ENCODE measurements at regions of chr2 and their contacts with region 1.

Region 1: DNA sequence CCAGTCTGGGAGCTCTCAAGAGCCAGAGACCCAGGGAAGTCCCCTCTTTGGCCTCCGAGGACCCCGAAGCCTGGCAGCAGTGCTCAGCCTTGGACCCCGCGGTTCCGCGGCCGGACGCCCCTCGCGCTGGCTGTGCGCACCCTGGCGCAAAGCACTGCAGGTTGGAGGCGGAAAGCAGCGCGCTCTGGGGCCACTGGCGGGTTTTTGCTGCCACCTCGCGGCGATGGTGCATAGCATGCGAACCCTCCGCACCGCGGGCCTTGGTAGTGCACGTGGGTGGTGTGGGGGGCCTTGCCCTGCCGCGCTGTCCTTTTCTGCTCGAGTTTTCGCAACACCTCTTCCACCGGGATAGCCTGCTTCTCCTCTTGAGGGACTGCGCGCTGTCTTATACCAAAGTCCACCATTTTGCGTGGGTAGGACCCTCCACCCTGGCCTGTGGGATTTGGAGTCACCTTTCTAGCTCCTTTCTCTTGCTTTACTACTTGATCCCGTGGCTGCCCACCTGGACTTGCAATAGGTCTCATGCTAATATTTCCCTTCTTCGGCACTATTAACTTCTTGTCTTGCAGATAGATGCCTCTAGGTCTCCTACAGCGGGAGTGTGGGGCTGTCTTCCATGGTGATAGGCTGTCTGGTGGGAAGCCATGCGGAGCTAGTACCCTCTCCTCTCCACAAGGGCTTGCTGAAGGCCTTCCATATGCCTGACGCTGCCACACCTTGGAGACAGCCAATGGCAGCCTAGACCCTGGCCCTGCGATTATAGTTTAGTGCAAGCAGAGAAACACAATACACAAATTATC is 14.3 kb downstream of the SIX3 start:
- DNase-seq: no peak
- H3K4me3 ChIP-seq: peak overlapping the region in 2 of 3 experiments; percentile 43 to 49
- H3K27ac ChIP-seq: no peak overlapping the region
- H3K4me1 ChIP-seq: peaks cover 31% of the 10 kb centered on the region
- H3K27me3 ChIP-seq: peaks cover 43% of the 10 kb centered on the region
- CTCF ChIP-seq: peak; percentile 71 to 98 (median 96)

Region 2: DNA sequence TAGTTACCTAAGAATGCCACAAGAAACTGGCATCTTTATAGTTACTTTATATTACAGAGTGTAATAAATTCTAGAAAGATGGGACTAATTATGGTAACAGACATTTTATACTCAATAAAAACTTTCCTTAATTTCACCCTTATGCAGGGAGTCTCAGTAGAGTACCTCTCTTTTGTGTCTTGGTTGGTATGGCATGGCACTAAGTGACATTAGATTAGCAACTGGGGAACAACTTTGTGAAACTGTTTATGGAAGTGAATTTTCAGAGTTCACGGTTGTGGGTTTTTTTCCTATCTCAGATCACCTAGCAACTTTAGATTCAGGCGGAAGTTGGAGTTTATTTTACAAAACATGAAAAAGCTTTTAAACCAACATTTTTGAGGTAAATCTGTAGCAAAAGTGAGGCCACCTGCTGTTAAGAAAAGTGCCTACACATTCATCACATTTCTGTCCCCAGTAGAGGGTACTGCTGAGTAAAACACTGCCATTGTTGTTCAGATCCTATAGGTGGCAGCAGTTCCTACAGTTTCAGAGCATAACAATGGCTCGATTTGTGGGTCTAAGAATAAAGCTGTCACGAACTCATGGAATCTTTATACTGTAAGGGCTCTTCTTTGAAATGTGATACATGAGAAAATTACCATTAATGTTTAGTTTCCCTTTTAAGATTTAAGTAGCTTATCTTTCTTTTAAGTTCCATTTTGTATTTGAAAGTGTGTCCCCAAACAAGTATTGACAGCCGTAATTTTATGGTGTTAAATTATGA is 476.5 kb before region 1 on chr2:
- dilution Hi-C with region 1: loop called (anchors 25 kb)
- DNase-seq: peak; percentile 35
- H3K4me3 ChIP-seq: no peak overlapping the region
- H3K27ac ChIP-seq: no peak overlapping the region
- H3K4me1 ChIP-seq: no peaks in the 10 kb centered on the region
- H3K27me3 ChIP-seq: no peaks in the 10 kb centered on the region
- CTCF ChIP-seq: peak; percentile 94 to 100 (median 97)

Region 3: GRCh38 chr2:44700824-44701223 is 255.0 kb before region 1 on chr2:
- dilution Hi-C with region 1: no loop called
- DNase-seq: no peak
- H3K4me3 ChIP-seq: no peak overlapping the region
- H3K27ac ChIP-seq: no peak overlapping the region
- H3K4me1 ChIP-seq: no peaks in the 10 kb centered on the region
- H3K27me3 ChIP-seq: no peaks in the 10 kb centered on the region
- CTCF ChIP-seq: no peak

Region 4: DNA sequence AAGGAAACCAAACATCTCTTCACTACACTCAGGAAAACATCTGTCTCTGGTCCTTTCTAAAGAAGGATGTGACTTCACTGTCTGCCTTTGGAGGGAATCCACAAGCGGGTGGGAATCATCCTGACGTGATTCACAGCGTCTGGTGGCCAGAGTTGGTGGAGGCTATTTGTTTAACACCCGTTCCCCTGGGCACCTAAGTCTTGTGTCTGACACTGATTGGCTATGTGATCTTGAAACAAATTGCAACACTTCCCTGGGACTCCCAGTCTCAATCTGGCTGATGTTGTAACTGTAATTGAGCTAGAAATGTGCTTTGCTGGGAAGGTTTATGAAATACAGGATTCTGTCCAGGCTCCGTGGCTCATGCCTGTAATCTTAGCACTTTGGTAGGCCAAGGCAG is 43.1 kb before region 1 on chr2:
- dilution Hi-C with region 1: no loop called
- DNase-seq: no peak
- H3K4me3 ChIP-seq: no peak overlapping the region
- H3K27ac ChIP-seq: no peak overlapping the region
- H3K4me1 ChIP-seq: no peaks in the 10 kb centered on the region
- H3K27me3 ChIP-seq: peaks cover 17% of the 10 kb centered on the region
- CTCF ChIP-seq: no peak

Measured in keratinocyte (primary cell).